ENCODE measurements at regions of chr17 and their contacts with region 1.

Region 1: DNA sequence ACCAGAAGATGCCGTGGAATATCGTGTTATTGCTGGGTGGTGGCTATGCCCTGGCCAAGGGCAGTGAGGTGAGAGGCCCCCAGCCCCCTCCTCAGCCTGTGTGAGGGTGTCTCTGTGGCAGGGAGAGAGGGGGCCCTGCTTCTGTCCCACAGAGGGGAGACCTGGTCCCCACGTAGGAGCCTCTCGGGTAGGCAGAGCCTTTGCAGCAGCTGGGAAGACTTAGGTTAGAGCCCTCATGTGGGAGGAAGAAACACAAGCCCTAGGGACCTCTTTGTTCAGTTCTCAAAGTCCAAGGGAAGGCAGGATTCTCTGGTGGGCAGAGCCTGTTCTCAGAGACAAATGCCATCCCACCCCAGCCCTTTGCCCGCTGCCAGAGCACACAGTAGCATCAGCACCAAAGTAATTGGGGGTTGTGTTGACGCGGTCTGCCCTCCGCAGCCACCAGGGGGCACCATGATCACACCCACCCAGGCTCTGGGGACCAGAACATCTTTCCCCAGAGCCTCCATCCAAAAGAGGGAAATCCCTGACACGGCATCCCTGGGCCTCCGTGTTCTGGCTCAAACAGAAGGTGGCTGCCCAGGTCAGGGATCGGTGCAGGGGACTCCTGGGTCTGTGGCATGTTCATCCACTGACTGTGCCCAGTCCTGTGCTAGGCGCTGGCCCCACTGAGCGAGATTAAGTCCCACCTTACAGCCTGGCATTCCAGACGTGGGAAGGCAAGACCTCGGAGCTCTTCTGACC is 11.5 kb upstream of the FOXN1 start:
- DNase-seq: peak; percentile 48 to 89
- H3K4me3 ChIP-seq: no peak overlapping the region
- H3K4me1 ChIP-seq: no peaks in the 10 kb centered on the region
- H3K27me3 ChIP-seq: peaks cover 10% of the 10 kb centered on the region; the same call in 1 of the 2 replicates

Region 2: GRCh38 chr17:28371245-28372202 is 123.1 kb before region 1 on chr17 and contains the start of gene SARM1:
- in situ Hi-C with region 1: no loop called
- DNase-seq: peak; percentile 88 to 99
- H3K4me3 ChIP-seq: peak within 1 kb of the TSS; percentile 45
- H3K4me1 ChIP-seq: no peaks in the 10 kb centered on the region; the same call in 1 of the 2 replicates
- H3K27me3 ChIP-seq: no peaks in the 10 kb centered on the region

Region 3: GRCh38 chr17:28405632-28406472 is 88.8 kb before region 1 on chr17 and contains the start of gene SLC46A1:
- in situ Hi-C with region 1: no loop called
- DNase-seq: peak; percentile 71 to 92
- H3K4me3 ChIP-seq: peak within 1 kb of the TSS; percentile 69
- H3K4me1 ChIP-seq: peaks cover 21% of the 10 kb centered on the region
- H3K27me3 ChIP-seq: no peaks in the 10 kb centered on the region

Region 4: GRCh38 chr17:28536532-28537238 is 42.1 kb after region 1 on chr17:
- in situ Hi-C with region 1: loop called (anchors 5 kb)
- DNase-seq: no peak
- H3K4me3 ChIP-seq: no peak overlapping the region
- H3K4me1 ChIP-seq: no peaks in the 10 kb centered on the region
- H3K27me3 ChIP-seq: peaks cover 2% of the 10 kb centered on the region; the same call in 1 of the 2 replicates

Region 5: DNA sequence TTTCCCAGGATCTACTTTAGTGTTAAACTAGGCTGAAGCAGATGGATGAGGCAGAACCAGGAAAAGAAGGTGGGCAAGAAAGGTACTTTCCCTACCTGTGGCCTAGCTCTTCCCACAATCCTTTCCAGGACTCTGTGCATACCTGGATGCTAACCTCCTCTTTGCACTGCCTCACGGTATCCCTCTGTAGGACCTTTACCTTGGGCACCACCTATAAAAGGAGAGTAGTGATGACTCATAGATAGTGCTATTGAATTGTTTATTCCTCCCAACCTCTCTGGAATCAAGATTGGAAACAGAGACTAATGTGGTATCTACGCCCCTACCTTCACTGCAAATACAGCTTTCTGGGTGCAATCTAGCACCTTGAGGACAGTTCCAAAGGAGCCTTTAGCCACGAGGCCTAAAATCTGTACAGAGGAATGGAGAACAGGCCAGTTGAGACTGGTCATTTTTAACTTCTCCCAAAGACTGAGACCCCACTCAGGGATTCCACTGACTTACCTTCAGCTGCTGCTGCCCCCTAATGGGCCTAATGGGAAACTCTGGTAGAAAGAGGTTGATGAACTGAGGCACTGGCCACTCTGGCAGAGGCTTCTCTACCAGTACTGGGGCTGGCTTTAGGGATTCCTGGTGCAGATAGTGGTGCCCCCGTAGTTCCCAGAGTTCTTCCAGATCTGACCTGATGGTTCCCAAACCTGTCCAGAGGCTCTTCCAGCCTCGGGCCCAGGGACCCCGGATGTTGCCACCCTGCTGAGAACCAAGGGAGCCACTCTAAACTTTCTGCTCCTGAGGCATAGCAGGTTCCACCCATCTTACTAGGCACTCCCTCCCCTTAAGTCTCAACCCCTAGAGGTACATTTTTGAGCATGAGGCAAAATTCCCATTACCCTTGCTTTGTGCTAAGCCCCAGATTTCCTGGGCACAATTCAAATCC is 118.6 kb after region 1 on chr17:
- in situ Hi-C with region 1: loop called (anchors 5 kb)
- DNase-seq: peak; percentile 43 to 64
- H3K4me3 ChIP-seq: no peak overlapping the region
- H3K4me1 ChIP-seq: no peaks in the 10 kb centered on the region
- H3K27me3 ChIP-seq: no peaks in the 10 kb centered on the region

Measured in HAP-1 (cell line).